ENCODE measurements at regions of chr14 and their contacts with region 1.

Region 1: DNA sequence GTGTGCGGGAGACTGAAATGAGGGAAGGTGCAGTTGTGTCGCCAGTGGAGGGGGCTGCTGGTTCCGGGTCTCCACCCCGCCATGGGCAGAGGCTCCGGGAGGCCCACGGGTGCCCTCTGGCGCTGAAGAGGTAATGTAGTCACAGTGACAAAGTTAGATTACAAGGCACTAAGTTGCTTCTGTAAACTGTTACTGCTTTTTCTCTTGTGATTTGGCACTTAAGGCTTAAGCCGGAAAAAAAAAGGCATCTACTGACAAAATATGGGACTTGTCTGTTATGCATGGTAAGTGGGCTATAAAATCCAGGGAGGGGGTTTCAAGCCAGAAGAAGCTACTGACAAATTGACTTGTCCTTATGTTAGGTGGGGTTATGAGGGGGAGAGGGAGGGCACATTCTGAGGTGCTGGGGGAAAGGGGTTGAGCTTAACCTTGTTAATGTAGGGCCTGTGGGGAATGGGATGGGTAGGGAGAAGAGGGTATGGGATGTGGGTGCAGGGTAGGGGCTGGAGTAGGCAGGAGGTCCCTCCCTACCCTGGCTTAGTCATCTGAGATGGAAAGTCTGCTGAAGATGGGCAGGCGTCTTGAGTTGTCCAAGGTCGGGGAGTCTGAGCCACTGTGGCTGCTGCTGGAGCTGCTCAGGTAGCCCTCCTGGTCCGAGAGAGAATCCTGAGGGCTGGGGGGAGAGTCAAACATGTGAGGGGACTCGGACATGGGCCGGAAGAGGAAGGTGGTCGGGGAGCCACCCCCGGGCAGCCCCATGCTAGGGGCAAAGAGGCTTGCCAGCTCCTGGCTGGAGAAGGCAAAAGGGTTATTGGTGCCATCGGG is 3.7 kb downstream of the ZFP36L1 start:
- DNase-seq: no peak
- H3K4me3 ChIP-seq: peak overlapping the region; percentile 100
- H3K27ac ChIP-seq: peak overlapping the region; percentile 100
- H3K27me3 ChIP-seq: no peaks in the 10 kb centered on the region
- CTCF ChIP-seq: peak; percentile 76

Region 2: GRCh38 chr14:68248481-68249255 is 540.5 kb before region 1 on chr14:
- CTCF ChIA-PET with region 1: interaction called, 29 read pairs
- POLR2A ChIA-PET with region 1: interaction called, 13 read pairs
- DNase-seq: no peak
- H3K4me3 ChIP-seq: no peak overlapping the region
- H3K27ac ChIP-seq: peak overlapping the region; percentile 33
- H3K27me3 ChIP-seq: no peaks in the 10 kb centered on the region
- CTCF ChIP-seq: peak; percentile 60

Region 3: DNA sequence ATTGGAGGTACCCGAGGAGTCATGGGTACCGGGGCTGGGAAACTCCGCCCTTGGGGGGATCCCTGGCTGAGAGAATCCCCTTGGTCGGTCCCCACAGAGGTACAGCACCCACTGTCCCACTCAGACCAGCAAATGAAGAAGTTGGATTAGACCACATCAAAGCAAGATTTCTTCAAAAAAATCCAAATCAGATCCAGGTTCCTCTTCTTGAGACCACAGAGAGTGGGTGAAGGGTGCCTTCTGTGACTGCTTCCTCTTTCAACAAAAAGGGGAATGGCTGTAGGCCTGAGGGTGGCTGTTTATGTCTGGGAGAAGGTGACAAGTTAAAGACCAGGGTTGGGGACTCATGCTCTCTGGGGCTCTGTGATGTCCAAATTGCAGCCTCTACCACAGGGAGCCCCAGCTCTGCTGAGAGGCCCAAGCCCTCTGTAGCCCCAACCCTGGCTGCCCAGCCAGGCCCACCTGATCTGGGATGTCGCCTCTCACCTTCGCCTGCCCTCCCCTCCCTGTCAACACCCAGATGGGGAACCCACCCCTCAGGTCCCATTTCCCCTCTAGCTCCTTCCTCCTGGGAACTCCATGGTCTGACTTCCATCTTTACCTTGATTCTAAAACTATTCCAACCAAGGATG is 47.3 kb before region 1 on chr14:
- CTCF ChIA-PET with region 1: no interaction called
- POLR2A ChIA-PET with region 1: no interaction called
- DNase-seq: no peak
- H3K4me3 ChIP-seq: no peak overlapping the region
- H3K27ac ChIP-seq: no peak overlapping the region
- H3K27me3 ChIP-seq: no peaks in the 10 kb centered on the region
- CTCF ChIP-seq: no peak

Region 4: GRCh38 chr14:68807148-68807600 is 18.0 kb after region 1 on chr14:
- CTCF ChIA-PET with region 1: interaction called, 3 read pairs
- POLR2A ChIA-PET with region 1: interaction called, 55 read pairs
- DNase-seq: peak; percentile 95
- H3K4me3 ChIP-seq: no peak overlapping the region
- H3K27ac ChIP-seq: peak overlapping the region; percentile 97
- H3K27me3 ChIP-seq: no peaks in the 10 kb centered on the region
- CTCF ChIP-seq: no peak